CD4-positive, alpha-beta T cell (primary cell): ENCODE measurements at regions of chr5 and their contacts with region 1.

Region 1: GRCh38 chr5:115571441-115571878 is 26.9 kb upstream of the FEM1C start:
- DNase-seq: no peak
- ATAC-seq: no peak
- H3K4me3 ChIP-seq: no peak overlapping the region
- H3K4me3 Mint-ChIP-seq: no peak overlapping the region
- H3K27ac ChIP-seq: no peak overlapping the region
- H3K27ac Mint-ChIP-seq: no peak overlapping the region
- H3K4me1 ChIP-seq: no peaks in the 10 kb centered on the region
- H3K4me1 Mint-ChIP-seq: no peaks in the 10 kb centered on the region
- H3K27me3 ChIP-seq: no peaks in the 10 kb centered on the region
- H3K27me3 Mint-ChIP-seq: no peaks in the 10 kb centered on the region
- CTCF ChIP-seq: no peak

Region 2: GRCh38 chr5:113612060-113612496 is 1959.4 kb before region 1 on chr5:
- CTCF ChIA-PET with region 1: no interaction called
- POLR2A ChIA-PET with region 1: no interaction called
- intact Hi-C with region 1: loop called in 1 of 2 experiments (anchors 5 kb)
- DNase-seq: peak in 3 of 14 experiments; percentile 43 to 58 (median 58)
- ATAC-seq: peak; percentile 80
- H3K4me3 ChIP-seq: no peak overlapping the region
- H3K4me3 Mint-ChIP-seq: no peak overlapping the region
- H3K27ac ChIP-seq: no peak overlapping the region
- H3K27ac Mint-ChIP-seq: no peak overlapping the region
- H3K4me1 ChIP-seq: peaks cover 3% of the 10 kb centered on the region
- H3K4me1 Mint-ChIP-seq: peaks cover 5% of the 10 kb centered on the region
- H3K27me3 ChIP-seq: peaks cover 0 to 3% of the 10 kb centered on the region in 2 experiments
- H3K27me3 Mint-ChIP-seq: peaks cover 32% of the 10 kb centered on the region
- CTCF ChIP-seq: peak; percentile 72

Region 3: GRCh38 chr5:114948986-114949621 is 622.4 kb before region 1 on chr5:
- CTCF ChIA-PET with region 1: no interaction called
- POLR2A ChIA-PET with region 1: no interaction called
- intact Hi-C with region 1: no loop called
- DNase-seq: no peak
- ATAC-seq: no peak
- H3K4me3 ChIP-seq: no peak overlapping the region
- H3K4me3 Mint-ChIP-seq: no peak overlapping the region
- H3K27ac ChIP-seq: no peak overlapping the region
- H3K27ac Mint-ChIP-seq: no peak overlapping the region
- H3K4me1 ChIP-seq: no peaks in the 10 kb centered on the region
- H3K4me1 Mint-ChIP-seq: no peaks in the 10 kb centered on the region
- H3K27me3 ChIP-seq: no peaks in the 10 kb centered on the region
- H3K27me3 Mint-ChIP-seq: no peaks in the 10 kb centered on the region
- CTCF ChIP-seq: no peak

Region 4: DNA sequence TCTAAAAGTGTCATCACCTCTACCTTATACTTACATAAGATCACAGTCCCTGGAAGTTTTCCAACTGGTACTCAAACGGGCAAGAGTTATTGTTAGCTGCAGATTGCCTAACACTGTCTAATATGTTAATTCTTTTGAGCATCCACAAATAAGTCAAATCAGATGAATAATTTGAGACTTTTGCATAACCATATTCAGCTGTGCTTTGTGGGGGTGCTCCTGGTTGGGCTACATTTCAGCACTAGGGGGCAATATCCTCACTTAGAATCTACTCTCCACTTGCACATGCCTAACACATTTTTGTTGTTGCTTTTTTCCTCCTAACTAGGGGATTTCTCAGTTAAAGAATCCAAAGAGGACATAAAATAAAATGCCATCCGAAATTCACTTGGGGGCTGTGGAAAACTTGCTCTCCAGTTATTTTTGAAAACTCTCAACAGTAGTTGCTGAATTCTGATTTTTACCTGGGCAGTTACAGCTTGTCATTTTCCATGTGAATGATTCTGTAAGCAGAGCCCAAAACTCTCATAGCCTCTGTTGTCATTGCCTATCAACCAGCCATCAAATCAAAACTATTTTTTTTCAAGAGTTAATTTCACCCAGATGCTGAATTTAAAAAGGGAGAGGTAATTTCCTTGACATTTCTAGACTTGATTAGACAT is 473.3 kb before region 1 on chr5:
- CTCF ChIA-PET with region 1: no interaction called
- POLR2A ChIA-PET with region 1: no interaction called
- intact Hi-C with region 1: loop called in 1 of 2 experiments (anchors 5 kb)
- DNase-seq: peak in 7 of 14 experiments; percentile 1 to 56 (median 8)
- ATAC-seq: peak; percentile 54
- H3K4me3 ChIP-seq: no peak overlapping the region
- H3K4me3 Mint-ChIP-seq: no peak overlapping the region
- H3K27ac ChIP-seq: no peak overlapping the region
- H3K27ac Mint-ChIP-seq: no peak overlapping the region
- H3K4me1 ChIP-seq: no peaks in the 10 kb centered on the region
- H3K4me1 Mint-ChIP-seq: no peaks in the 10 kb centered on the region
- H3K27me3 ChIP-seq: peaks cover 2 to 7% of the 10 kb centered on the region in 2 experiments
- H3K27me3 Mint-ChIP-seq: peaks cover 28% of the 10 kb centered on the region
- CTCF ChIP-seq: peak; percentile 63

Region 5: GRCh38 chr5:115968770-115969169 is 397.3 kb after region 1 on chr5:
- CTCF ChIA-PET with region 1: no interaction called
- POLR2A ChIA-PET with region 1: no interaction called
- intact Hi-C with region 1: no loop called
- DNase-seq: no peak
- ATAC-seq: no peak
- H3K4me3 ChIP-seq: no peak overlapping the region
- H3K4me3 Mint-ChIP-seq: no peak overlapping the region
- H3K27ac ChIP-seq: no peak overlapping the region
- H3K27ac Mint-ChIP-seq: no peak overlapping the region
- H3K4me1 ChIP-seq: no peaks in the 10 kb centered on the region
- H3K4me1 Mint-ChIP-seq: no peaks in the 10 kb centered on the region
- H3K27me3 ChIP-seq: peaks cover 9 to 18% of the 10 kb centered on the region in 2 experiments
- H3K27me3 Mint-ChIP-seq: peaks cover 49% of the 10 kb centered on the region
- CTCF ChIP-seq: no peak